Activated naive CD4-positive, alpha-beta T cell treated with anti-CD3 and anti-CD28 coated beads for 36 hours (primary cell): ENCODE measurements at regions of chr10 and their contacts with region 1.

Region 1: GRCh38 chr10:87659571-87660483 is at the start of gene PAPSS2:
- DNase-seq: peak; percentile 27
- H3K4me3 Mint-ChIP-seq: peak within 1 kb of the TSS; percentile 74
- H3K27ac Mint-ChIP-seq: no peak within 1 kb of the TSS
- H3K4me1 Mint-ChIP-seq: peaks cover 10% of the 10 kb centered on the region
- H3K27me3 Mint-ChIP-seq: peaks cover 48% of the 10 kb centered on the region
- total RNA-seq, gene PAPSS2: 0.38 TPM in 1 of 2 experiments, not detected in the other

Region 2: DNA sequence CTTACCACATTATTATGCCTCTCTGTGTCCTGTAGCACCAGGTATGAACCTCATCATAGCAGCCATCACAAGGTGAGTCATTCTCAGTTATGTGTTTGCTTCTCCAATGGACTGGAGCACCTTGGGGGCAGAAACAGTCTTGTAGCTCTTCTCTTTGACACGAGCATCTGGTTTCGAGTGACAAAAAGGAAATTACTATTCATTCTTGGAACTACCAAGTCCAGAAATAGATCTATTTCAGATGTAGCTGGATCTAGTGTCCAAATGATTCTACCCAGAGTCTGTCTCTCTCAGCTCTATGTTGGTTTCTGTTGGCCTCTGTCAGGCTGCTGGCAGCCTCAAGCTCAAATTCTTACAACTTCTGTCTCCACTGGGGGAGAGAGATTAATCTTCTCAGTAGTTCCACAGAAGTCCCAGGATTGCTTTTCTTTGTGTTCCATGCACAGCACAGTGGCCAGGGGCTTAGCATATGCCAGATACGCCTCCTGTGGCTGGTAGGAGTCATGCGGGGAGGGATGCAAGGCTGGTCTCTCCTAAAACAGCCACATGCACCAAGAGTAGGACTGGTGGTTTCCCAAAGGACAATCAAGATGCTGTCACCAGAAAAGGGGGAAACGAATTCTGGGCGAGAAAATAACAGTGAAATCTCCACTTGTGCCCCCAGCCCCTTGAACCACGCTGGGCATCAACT is 37.4 kb before region 1 on chr10:
- CTCF ChIA-PET with region 1: no interaction called
- intact Hi-C with region 1: no loop called
- DNase-seq: no peak
- H3K4me3 Mint-ChIP-seq: no peak overlapping the region
- H3K27ac Mint-ChIP-seq: no peak overlapping the region
- H3K4me1 Mint-ChIP-seq: no peaks in the 10 kb centered on the region
- H3K27me3 Mint-ChIP-seq: peaks cover 17% of the 10 kb centered on the region

Region 3: DNA sequence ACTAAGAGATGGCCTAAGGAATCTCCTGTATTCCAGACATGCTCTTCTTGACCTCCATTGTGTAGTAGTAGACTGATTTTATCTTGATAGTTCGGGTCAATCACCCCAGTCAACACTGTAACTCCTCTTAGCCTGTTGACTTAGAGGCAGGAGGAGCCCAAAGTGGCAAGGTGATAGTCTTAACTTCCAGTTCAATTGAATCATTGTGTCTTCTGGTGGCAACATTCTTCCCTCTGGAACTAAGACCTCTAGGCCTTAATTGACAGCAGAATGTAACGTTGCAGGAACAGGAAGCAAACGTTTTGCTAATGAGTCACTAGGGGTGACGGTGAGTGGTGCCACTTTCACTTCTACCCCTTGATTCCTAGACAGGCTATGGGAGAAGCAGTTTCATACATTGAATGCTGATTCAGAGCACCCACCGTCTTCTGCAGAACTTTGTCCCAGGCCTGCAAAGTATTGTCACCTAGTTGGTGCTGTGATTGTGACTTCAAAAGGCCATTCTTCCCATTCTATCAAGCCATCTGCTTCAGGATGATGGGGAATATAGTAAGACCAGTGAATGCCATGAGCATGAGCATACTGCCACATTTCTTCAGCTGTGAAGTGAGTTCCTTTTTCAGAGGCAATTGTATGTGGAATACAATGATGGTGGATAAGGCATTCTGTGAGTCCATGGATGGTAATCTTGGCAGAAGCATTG is 24.1 kb before region 1 on chr10:
- CTCF ChIA-PET with region 1: no interaction called
- intact Hi-C with region 1: no loop called
- DNase-seq: peak; percentile 62
- H3K4me3 Mint-ChIP-seq: no peak overlapping the region
- H3K27ac Mint-ChIP-seq: no peak overlapping the region
- H3K4me1 Mint-ChIP-seq: peaks cover 8% of the 10 kb centered on the region
- H3K27me3 Mint-ChIP-seq: no peaks in the 10 kb centered on the region

Region 4: DNA sequence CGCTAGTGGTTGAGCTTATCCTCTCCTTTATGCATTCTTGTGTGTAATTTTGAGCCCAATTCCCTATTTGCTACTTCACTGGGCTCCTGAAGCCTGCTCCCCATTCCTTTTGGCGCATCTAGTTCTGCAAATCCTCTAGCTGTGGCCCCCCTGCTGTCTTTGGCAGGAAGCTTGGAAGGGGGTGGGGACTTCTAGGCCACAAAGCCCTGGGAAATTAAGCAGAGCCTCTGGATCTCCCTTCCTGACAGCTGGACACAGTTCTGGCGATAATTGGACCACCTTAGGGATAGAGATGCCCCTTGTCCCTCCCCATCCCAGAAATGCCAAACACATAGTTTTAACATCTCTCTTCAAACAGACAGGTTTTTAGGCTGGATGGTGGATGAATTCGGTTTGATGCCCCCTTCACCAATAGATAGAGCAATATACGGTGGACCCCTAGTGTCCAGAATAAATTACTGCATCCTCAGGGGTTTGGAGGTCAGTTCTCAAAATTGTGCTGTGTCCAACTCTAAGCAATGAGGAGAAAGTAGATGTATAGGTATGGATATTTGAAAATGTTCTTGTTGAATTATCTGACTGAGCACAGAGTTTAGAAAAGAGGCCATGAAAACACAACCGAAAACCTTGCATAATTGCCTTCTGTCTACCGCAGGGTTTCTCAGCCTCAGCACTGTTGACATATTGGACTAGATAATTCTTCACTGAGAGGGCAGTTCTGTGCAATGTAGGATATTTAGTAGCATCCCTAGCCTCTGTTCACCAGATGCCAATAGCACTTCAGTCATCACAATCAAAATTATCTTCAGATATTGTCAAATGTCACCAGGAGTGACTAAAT is 75.4 kb after region 1 on chr10:
- CTCF ChIA-PET with region 1: interaction called, 6 read pairs
- intact Hi-C with region 1: loop called (anchors 1 kb)
- DNase-seq: no peak
- H3K4me3 Mint-ChIP-seq: no peak overlapping the region
- H3K27ac Mint-ChIP-seq: no peak overlapping the region
- H3K4me1 Mint-ChIP-seq: no peaks in the 10 kb centered on the region
- H3K27me3 Mint-ChIP-seq: peaks cover 15% of the 10 kb centered on the region

Region 5: GRCh38 chr10:87771871-87772500 is 112.2 kb after region 1 on chr10:
- CTCF ChIA-PET with region 1: interaction called, 4 read pairs
- intact Hi-C with region 1: loop called (anchors 1 kb)
- DNase-seq: no peak
- H3K4me3 Mint-ChIP-seq: no peak overlapping the region
- H3K27ac Mint-ChIP-seq: no peak overlapping the region
- H3K4me1 Mint-ChIP-seq: peaks cover 8% of the 10 kb centered on the region
- H3K27me3 Mint-ChIP-seq: no peaks in the 10 kb centered on the region

Region 6: DNA sequence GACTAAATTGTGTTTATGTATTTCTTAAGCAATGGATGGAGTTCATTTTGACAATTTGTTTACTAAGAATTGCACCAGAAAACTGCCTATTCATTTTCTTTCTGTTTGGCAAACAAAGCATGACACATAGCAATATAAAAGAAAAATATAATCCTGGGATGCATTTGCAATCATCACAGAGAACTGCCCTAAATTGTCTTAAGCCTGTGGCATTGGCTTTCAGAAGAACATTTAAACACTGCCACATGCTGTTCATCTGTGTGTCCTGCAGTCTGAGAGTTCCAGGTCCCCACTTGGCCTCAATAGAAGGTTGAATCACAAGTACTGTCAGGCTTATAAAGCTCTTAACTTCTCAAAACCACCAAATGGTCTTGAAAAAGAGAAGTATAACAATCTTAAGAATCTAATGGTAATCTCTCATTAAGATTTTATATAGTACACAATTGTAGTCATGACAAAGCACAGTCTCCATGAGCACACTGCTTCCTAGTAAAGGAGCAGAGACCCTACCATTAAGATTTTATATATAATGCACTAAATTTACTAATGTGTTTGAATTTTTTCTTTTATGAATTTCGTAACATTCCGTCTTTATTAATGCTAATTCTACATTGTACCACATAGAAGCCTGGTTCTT is 893.4 kb after region 1 on chr10:
- CTCF ChIA-PET with region 1: no interaction called
- intact Hi-C with region 1: loop called (anchors 1 kb)
- DNase-seq: peak; percentile 54
- H3K4me3 Mint-ChIP-seq: no peak overlapping the region
- H3K27ac Mint-ChIP-seq: no peak overlapping the region
- H3K4me1 Mint-ChIP-seq: no peaks in the 10 kb centered on the region
- H3K27me3 Mint-ChIP-seq: no peaks in the 10 kb centered on the region